ENCODE measurements at regions of chr15 and their contacts with region 1.

Region 1: GRCh38 chr15:33292717-33293307 is 18.0 kb upstream of the RYR3 start:
- DNase-seq: no peak
- H3K4me3 ChIP-seq: no peak overlapping the region
- H3K27me3 ChIP-seq: peaks cover 8% of the 10 kb centered on the region; the same call in 1 of the 2 replicates
- CTCF ChIP-seq: peak; percentile 69

Region 2: GRCh38 chr15:33278816-33279612 is 13.8 kb before region 1 on chr15:
- CTCF ChIA-PET with region 1: interaction called, 23 read pairs
- POLR2A ChIA-PET with region 1: no interaction called
- DNase-seq: peak; percentile 19
- H3K4me3 ChIP-seq: no peak overlapping the region
- H3K27me3 ChIP-seq: 0 out of 2 replicates have a peak, but pooled peaks cover 1% of the 10 kb centered on the region
- CTCF ChIP-seq: peak; percentile 40

Region 3: GRCh38 chr15:33926260-33926659 is 633.4 kb after region 1 on chr15:
- CTCF ChIA-PET with region 1: no interaction called
- POLR2A ChIA-PET with region 1: no interaction called
- DNase-seq: no peak
- H3K4me3 ChIP-seq: no peak overlapping the region
- H3K27me3 ChIP-seq: no peaks in the 10 kb centered on the region
- CTCF ChIP-seq: no peak